BJ (cell line): ENCODE measurements at regions of chr5 and their contacts with region 1.

Region 1: DNA sequence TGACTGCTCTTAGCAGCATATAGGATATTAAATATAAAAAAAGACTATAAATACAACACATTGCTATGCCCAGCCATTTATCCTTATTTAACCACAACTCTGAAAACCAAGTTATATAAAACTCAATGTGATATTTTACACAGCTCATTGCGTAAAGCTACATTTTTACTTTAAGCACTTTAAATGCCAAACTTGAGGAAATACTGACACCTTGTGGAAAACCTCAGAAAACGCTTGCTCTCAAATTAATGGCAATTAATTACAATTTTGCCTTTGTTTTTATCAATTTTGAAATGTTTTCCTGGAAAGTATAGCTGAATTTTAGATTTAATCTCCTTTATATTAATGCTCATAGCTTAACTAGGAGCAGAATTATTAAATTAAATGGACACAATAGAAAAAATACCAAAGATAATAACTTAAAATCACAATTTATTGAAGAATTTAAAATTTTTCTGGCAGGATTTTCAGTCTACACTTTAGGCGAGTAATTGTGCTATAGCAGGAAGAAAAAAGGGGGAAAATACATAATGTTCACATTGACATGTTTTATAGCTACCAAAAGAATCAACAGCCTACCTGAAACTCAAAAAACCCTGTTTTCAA is 25.2 kb upstream of the PLAC8L1 start:
- DNase-seq: no peak
- H3K4me3 ChIP-seq: no peak overlapping the region
- H3K27me3 ChIP-seq: no peaks in the 10 kb centered on the region
- CTCF ChIP-seq: peak; percentile 52

Region 2: GRCh38 chr5:146079695-146080361 is 50.7 kb before region 1 on chr5:
- CTCF ChIA-PET with region 1: no interaction called
- POLR2A ChIA-PET with region 1: no interaction called
- DNase-seq: no peak
- H3K4me3 ChIP-seq: no peak overlapping the region
- H3K27me3 ChIP-seq: no peaks in the 10 kb centered on the region; the same call in 1 of the 2 replicates
- CTCF ChIP-seq: no peak

Region 3: DNA sequence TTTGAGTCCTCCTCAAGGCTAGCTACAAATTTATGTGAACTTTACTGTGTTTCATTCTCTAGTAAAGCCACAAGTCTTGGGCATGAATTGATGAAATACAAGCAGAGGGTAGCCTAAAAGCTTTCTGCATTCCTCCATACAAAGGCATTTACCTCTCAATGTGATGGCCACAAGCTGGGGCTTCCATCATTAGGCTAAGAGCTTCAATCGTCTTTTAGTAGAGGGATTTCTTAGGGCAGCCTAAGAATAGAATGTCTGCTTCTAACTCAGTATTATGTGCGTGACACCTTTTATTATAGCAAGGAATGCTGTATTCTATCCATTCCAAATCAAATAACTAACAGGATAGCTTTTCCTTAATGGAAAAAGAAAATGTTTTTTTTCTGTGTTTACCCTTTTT is 28.9 kb before region 1 on chr5:
- CTCF ChIA-PET with region 1: interaction called, 3 read pairs
- POLR2A ChIA-PET with region 1: interaction called, 12 read pairs
- DNase-seq: no peak
- H3K4me3 ChIP-seq: no peak overlapping the region
- H3K27me3 ChIP-seq: no peaks in the 10 kb centered on the region
- CTCF ChIP-seq: no peak